WTC11 (cell line): ENCODE measurements at regions of chr21 and their contacts with region 1.

Region 1: DNA sequence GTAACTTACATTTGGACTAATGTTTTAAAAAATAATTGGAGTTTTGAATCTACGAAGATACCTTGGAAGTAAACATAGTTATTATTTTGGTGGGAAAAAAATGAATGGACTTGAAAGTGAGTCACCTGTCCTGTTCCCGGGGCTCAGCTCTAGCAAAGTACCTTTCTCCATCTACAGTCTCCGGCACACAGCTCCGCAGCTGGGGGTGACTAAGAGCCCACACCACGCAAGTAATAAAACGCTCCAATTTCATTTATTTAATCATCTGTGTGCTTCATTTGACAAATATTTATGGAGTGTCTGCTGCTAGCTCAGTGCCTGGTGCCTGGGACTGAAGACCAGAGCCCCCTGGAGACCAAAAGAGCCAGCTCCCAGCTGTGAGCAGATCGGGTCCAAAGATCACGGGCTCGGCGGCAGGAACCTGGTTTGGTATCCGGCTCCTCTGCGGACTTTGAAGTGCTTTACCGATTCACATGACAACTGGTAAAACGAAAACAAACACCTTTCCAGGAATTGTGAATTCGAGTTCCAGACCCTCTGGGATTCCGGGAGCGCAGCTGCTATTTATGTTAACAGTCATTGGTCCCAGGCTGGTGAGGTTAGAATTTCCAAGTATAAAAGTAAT is 1.7 kb upstream of the RIPK4 start:
- DNase-seq: peak; percentile 66
- ATAC-seq: peak; percentile 15
- H3K4me3 Mint-ChIP-seq: peak overlapping the region; percentile 83
- H3K27ac Mint-ChIP-seq: no peak overlapping the region; the same call in 1 of the 2 replicates
- H3K4me1 Mint-ChIP-seq: peaks cover 73% of the 10 kb centered on the region
- H3K27me3 Mint-ChIP-seq: peaks cover 89% of the 10 kb centered on the region
- CTCF ChIP-seq: no peak

Region 2: DNA sequence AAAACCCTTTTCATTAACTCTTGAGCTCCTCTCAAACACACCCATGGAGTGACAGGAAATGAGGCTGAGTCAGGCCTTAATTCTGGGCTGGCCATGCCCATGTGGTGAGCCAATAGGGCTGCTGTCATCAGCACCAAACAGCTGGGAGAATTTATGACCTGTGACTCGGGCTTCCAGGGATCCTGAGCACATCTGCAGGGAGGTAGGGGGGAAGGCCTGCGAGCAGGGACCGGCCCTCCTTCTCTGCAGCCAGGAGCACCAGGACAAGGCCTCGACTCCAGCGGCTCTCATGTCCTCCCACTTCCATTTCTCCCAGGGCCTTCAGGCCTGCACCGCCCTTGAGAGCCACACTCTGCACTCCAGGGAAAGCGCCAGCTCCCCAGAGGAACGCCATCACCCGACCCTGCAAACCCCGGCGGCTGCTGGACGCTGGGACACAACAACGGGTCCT is 16.3 kb before region 1 on chr21:
- CTCF ChIA-PET with region 1: interaction called, 28 read pairs
- POLR2A ChIA-PET with region 1: no interaction called
- DNase-seq: no peak
- ATAC-seq: no peak; the same call in 1 of the 2 replicates
- H3K4me3 Mint-ChIP-seq: no peak overlapping the region
- H3K27ac Mint-ChIP-seq: no peak overlapping the region
- H3K4me1 Mint-ChIP-seq: peaks cover 53% of the 10 kb centered on the region
- H3K27me3 Mint-ChIP-seq: no peaks in the 10 kb centered on the region; the same call in 1 of the 2 replicates
- CTCF ChIP-seq: no peak